Ovary (tissue), 10 donors: ENCODE measurements at regions of chr1 and their contacts with region 1.

Region 1: GRCh38 chr1:201905234-201905890 is 16.7 kb downstream of the SHISA4 start:
- DNase-seq: peak in 1 of 5 donors; percentile 15
- H3K4me3 ChIP-seq: no peak overlapping the region
- H3K27ac ChIP-seq: peak overlapping the region; percentile 47 to 94
- H3K4me1 ChIP-seq: peaks cover 49% of the 10 kb centered on the region
- H3K27me3 ChIP-seq: no peaks in the 10 kb centered on the region
- CTCF ChIP-seq: no peak
- EP300 ChIP-seq: no peak
- POLR2A ChIP-seq: no peak

Region 2: GRCh38 chr1:201946224-201946908 is 41.0 kb after region 1 on chr1 and contains the start of gene LMOD1:
- intact Hi-C with region 1: loop called in 1 of 4 experiments (anchors 5 kb)
- DNase-seq: peak; percentile 89 to 95 (median 93)
- H3K4me3 ChIP-seq: peak within 1 kb of the TSS; percentile 75
- H3K27ac ChIP-seq: peak within 1 kb of the TSS; percentile 73 to 89
- H3K4me1 ChIP-seq: peaks cover 15% of the 10 kb centered on the region
- H3K27me3 ChIP-seq: no peaks in the 10 kb centered on the region
- CTCF ChIP-seq: peak in 1 of 3 donors; percentile 13
- EP300 ChIP-seq: peak; percentile 36
- POLR2A ChIP-seq: peak; percentile 83
- total RNA-seq, gene LMOD1: 25.6 to 155 (median 67.2) TPM